SK-N-SH (cell line): ENCODE measurements at regions of chr5 and their contacts with region 1.

Region 1: GRCh38 chr5:172479044-172479783 is 24.9 kb upstream of the SH3PXD2B start:
- DNase-seq: peak; percentile 88
- H3K4me3 ChIP-seq: no peak overlapping the region; a peak in 1 of 4 replicates
- H3K27ac ChIP-seq: no peak overlapping the region
- H3K4me1 ChIP-seq: peaks cover 0 to 3% of the 10 kb centered on the region in 2 experiments; a peak in 1 of 4 replicates
- H3K27me3 ChIP-seq: no peaks in the 10 kb centered on the region
- CTCF ChIP-seq: peak; percentile 90
- EP300 ChIP-seq: no peak
- RAD21 ChIP-seq: peak; percentile 93

Region 2: GRCh38 chr5:172496671-172497371 is 17.6 kb after region 1 on chr5:
- CTCF ChIA-PET with region 1: interaction called, 10 read pairs
- POLR2A ChIA-PET with region 1: no interaction called
- DNase-seq: peak; percentile 53
- H3K4me3 ChIP-seq: no peak overlapping the region
- H3K27ac ChIP-seq: no peak overlapping the region
- H3K4me1 ChIP-seq: peaks cover 0 to 8% of the 10 kb centered on the region in 2 experiments; a peak in 1 of 4 replicates
- H3K27me3 ChIP-seq: peaks cover 4% of the 10 kb centered on the region; the same call in 1 of the 2 replicates
- CTCF ChIP-seq: no peak
- EP300 ChIP-seq: no peak
- RAD21 ChIP-seq: no peak

Region 3: DNA sequence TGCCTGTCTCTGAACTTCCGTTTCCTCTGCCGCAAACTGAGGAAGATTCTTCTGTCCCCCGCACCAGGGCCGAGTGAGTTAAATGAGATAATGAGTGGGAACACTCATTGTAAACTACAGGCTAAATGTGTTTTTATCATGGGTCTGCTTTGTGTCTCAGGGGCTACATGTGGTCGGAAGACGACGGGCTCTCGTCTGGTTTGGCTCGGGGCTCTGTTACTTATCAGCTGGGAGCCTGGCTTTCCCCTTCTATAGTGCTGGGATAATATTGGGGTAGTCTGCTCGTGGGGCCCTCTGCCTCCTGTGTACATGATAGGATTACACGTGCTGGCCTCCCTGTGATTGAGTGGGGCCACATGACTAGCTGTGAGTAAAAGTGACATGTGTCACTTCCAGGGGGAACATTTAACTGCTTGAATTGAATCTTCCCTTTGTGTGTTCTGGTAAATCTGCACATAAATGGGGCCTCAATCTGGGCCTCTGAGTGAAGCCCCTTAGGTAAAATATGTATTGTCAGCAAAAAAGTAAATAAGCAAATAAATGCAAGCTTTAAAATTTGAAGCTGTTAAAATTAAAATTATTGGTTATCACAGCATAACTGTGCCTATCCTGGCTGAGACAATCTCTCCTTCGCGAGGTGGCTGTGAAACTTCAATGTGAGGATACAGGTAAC is 62.0 kb after region 1 on chr5:
- CTCF ChIA-PET with region 1: interaction called, 10 read pairs
- POLR2A ChIA-PET with region 1: no interaction called
- DNase-seq: peak; percentile 90
- H3K4me3 ChIP-seq: no peak overlapping the region
- H3K27ac ChIP-seq: peak overlapping the region in 1 of 2 experiments; percentile 92; a peak in 2 of 4 replicates
- H3K4me1 ChIP-seq: peaks cover 0 to 31% of the 10 kb centered on the region in 2 experiments; a peak in 2 of 4 replicates
- H3K27me3 ChIP-seq: no peaks in the 10 kb centered on the region; the same call in 1 of the 2 replicates
- CTCF ChIP-seq: no peak
- EP300 ChIP-seq: peak in 1 of 2 experiments; percentile 97; a peak in 2 of 4 replicates
- RAD21 ChIP-seq: peak; percentile 27

Region 4: GRCh38 chr5:172640822-172641358 is 161.7 kb after region 1 on chr5 and contains the start of gene NEURL1B:
- CTCF ChIA-PET with region 1: interaction called, 42 read pairs
- POLR2A ChIA-PET with region 1: no interaction called
- DNase-seq: peak; percentile 98
- H3K4me3 ChIP-seq: peak within 1 kb of the TSS; percentile 89 to 91
- H3K27ac ChIP-seq: peak within 1 kb of the TSS; percentile 31 to 43; a peak in 2 of 4 replicates
- H3K4me1 ChIP-seq: peaks cover 5 to 33% of the 10 kb centered on the region in 2 experiments; a peak in 2 of 4 replicates
- H3K27me3 ChIP-seq: no peaks in the 10 kb centered on the region
- CTCF ChIP-seq: no peak
- EP300 ChIP-seq: no peak
- RAD21 ChIP-seq: no peak; the same call in 1 of the 2 replicates
- polyA plus RNA-seq, gene NEURL1B: 2.2 and 2.8 TPM in 2 replicates

Region 5: DNA sequence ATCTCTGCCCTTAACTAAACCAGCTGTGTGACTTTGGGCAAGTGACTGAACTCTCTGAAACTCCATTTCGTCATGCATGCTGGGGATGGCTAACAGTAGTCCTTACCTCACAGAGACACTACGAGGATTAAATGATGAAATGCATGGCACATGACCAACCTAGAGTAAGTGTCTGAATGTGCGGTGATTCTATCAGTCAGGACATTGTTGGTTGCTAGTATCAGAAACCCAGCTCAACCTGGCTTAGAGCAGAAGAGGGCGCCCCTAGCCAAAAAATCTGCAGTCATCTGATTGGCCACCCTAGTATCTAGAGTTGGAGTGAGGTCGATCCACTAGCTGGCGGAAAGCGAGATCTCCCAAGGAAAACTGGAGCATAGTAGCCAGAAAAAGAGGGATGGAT is 187.0 kb after region 1 on chr5:
- CTCF ChIA-PET with region 1: interaction called, 13 read pairs
- POLR2A ChIA-PET with region 1: no interaction called
- DNase-seq: no peak
- H3K4me3 ChIP-seq: no peak overlapping the region
- H3K27ac ChIP-seq: peak overlapping the region in 1 of 2 experiments; percentile 93; a peak in 1 of 4 replicates
- H3K4me1 ChIP-seq: peaks cover 0 to 27% of the 10 kb centered on the region in 2 experiments; a peak in 3 of 4 replicates
- H3K27me3 ChIP-seq: no peaks in the 10 kb centered on the region
- CTCF ChIP-seq: no peak
- EP300 ChIP-seq: no peak
- RAD21 ChIP-seq: peak; percentile 49

Region 6: DNA sequence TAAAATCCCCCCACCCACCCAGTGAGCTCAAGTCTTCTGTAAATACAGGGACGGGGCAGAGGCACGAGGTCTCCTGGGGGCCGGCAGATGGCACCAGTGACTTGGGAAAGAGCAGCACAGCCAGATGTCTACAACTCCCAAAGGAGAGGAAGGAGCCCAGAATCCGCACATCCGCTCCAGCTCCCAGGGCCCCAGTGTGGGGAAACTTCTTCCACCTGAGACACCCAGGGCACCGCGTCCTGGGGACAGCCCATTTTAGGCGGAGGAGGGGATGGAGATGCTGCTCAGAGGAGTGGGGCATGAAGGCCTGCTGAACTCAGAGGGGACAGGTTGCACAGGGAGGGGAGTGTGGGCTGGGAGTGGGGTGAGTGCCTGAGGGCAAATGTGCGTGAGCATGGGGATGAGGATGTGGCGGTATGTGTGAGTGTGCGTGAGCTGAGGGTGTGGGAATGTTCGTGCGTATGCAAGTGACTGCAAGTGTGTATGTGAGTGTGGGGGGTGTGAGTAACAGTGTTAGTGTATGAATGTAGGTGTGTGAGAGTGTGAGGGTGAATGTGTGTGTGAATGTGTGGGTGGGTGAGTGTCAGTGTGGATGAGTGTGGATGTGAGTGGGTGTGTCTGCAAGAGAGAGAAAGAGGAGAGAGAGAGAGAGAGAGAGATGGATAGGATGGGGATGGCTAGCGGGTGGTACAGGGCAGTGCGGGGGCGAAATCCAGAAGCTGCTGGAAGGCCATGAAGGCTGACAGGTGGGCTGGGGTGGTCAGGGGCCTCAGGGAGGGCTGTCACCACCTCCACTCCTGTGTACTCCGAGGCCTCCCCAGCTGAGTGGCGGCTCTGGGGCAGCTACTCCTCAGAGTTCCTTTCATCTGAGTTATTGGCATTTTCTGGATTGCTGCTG is 228.3 kb after region 1 on chr5:
- CTCF ChIA-PET with region 1: interaction called, 209 read pairs
- POLR2A ChIA-PET with region 1: no interaction called
- DNase-seq: peak; percentile 79
- H3K4me3 ChIP-seq: no peak overlapping the region
- H3K27ac ChIP-seq: no peak overlapping the region
- H3K4me1 ChIP-seq: peaks cover 0 to 3% of the 10 kb centered on the region in 2 experiments; a peak in 2 of 4 replicates
- H3K27me3 ChIP-seq: no peaks in the 10 kb centered on the region
- CTCF ChIP-seq: peak; percentile 74
- EP300 ChIP-seq: no peak
- RAD21 ChIP-seq: peak; percentile 87

Region 7: DNA sequence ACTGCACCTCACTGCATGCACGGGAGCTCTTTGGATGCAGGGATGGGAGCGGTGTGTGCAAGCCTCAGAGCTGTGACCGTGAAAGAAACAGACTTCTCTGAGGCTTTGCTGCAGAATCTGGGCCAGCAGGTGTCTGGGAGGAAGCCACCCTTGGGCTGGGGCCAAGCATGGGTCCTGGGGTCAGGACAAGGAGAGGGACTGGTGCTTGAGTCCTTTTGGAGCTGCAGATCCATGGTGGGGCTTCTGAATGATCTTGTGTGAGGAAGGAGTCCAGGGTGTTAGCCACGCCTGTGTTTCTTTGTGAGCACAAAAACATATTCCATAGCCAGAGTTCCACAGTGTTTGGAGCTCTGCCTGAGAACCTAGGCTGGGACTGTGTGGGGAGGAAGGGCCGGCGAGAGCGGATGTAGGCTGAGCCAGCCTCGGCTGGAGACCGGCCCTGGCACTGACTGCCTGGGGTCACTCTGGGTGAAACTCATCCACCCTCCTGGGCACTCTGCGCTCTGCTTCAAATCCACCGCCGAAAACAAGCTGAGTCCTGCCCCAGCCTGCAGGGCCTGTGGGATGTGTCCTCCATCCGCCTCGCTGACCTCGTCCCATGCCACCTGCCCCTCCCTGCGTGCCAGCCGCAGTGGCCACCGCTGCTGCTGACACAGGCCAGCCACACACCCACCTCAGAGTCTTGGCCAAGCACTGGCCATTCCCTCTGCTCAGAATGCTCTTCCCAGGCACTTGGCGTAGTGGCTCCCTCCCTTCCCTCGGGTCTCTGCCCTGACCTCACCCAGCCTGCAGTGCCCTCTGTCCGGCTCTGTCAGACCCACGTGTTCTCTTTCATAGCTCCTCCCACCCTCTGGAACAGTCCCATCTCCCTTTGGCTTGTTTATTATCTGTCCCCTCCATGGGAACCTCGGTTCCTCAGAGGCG is 381.6 kb after region 1 on chr5:
- CTCF ChIA-PET with region 1: no interaction called
- POLR2A ChIA-PET with region 1: no interaction called
- DNase-seq: no peak
- H3K4me3 ChIP-seq: no peak overlapping the region
- H3K27ac ChIP-seq: no peak overlapping the region
- H3K4me1 ChIP-seq: peaks cover 11 to 17% of the 10 kb centered on the region in 2 experiments; a peak in 2 of 4 replicates
- H3K27me3 ChIP-seq: no peaks in the 10 kb centered on the region
- CTCF ChIP-seq: no peak
- EP300 ChIP-seq: no peak
- RAD21 ChIP-seq: no peak